Heart right ventricle (tissue), 16 donors: ENCODE measurements at regions of chr1 and their contacts with region 1.

Region 1: DNA sequence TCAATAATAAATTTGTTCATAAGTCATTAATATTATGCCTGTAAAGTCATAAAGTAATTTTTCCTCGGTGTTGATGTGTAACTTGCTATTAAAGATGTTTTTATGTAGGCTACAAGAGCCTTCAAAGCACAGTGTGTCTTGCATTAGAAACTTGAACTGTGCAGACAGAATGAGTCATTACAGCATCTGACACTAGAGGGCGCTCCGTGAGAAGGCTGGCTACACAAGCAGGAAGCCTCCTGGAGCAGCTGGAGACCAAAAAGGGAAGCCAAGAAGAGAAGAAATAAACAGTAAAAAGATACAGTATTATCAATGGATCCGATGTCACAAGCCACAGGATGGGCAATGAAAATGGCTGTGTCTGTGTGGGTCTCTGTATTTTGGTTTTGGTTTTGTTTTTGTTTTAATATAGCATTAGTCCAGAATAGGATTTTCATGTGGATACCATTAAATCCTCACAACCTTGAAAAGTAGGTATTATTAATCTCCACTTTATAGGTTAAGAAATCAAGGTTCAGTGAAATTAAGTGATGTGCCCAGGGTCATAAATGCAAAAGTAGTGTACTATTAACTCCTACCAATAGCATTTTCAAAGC is 16.1 kb upstream of the LRRC8D start:
- DNase-seq: peak; percentile 58 to 89
- ATAC-seq: peak; percentile 81 to 96 (median 91)
- H3K4me3 ChIP-seq: no peak overlapping the region
- H3K27ac ChIP-seq: no peak overlapping the region
- H3K4me1 ChIP-seq: peaks cover 0 to 5% (median 0%) of the 10 kb centered on the region in 9 donors
- H3K27me3 ChIP-seq: peaks cover 0 to 5% (median 0%) of the 10 kb centered on the region in 7 donors
- CTCF ChIP-seq: peak; percentile 85 to 97 (median 92)

Region 2: DNA sequence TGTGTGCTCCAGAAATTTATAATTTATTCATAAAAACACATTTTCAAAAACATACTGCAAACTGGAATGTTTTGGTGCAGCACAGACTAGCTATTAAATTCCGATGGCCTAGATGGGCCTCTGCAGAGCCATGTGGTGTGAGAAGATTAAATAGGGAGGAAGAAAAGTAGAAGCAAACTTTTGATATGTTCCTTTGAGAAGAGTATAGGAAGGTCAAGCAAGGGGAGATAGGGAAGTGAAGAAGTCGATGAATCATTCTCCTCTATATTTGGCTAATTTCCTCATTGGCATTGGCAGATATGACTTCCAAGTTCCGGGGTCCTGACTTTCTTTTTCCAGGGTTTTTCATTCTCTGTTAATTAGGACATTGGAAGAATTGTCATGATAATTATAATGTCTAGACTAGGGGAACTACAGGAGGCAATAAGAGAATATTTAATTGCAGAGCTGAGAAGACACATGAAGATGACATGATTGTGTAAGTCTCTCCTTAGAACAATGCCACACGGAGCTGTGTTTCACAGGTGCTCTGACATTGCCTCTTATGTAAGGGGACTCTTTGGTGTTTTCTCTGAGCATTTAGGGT is 170.9 kb after region 1 on chr1:
- intact Hi-C with region 1: loop called in 1 of 10 experiments (anchors 2 kb)
- DNase-seq: no peak
- ATAC-seq: peak in 1 of 8 donors; percentile 44
- H3K4me3 ChIP-seq: no peak overlapping the region
- H3K27ac ChIP-seq: no peak overlapping the region
- H3K4me1 ChIP-seq: peaks cover 0 to 21% (median 0%) of the 10 kb centered on the region in 9 donors
- H3K27me3 ChIP-seq: no peaks in the 10 kb centered on the region
- CTCF ChIP-seq: no peak

Region 3: DNA sequence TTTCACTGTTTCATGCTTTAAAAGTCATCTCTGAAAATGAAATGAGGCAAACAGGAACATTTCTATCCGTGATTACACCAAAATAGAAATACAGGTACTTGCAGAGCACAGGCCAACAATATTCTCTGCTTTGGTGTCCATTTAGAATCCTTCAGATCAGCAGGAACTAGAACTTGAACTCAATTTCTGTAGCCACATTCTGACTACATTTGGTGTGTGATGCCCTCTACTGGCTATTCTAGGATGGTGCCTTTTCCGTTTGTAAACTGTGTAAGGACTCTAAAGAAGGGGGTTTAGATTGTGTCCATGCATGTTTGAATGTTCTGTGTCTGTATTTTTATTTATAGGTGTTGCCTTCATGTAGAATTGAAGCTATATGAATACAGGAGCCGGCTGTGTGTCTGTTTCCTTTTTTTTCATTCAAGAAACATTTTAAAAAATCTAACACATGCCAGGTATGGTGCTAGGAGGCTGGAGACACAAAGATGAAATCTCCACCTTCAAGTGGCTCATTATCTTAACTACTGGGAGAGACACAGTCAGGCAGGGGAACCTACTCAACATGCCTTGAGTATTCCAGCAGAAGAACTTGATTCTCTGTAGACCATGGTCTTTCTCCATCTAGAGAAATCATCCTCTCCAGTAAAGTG is 182.6 kb after region 1 on chr1:
- intact Hi-C with region 1: loop called in 9 of 10 experiments (anchors 1 to 5 kb)
- DNase-seq: peak in 1 of 2 donors; percentile 64
- ATAC-seq: peak; percentile 69 to 93 (median 90)
- H3K4me3 ChIP-seq: no peak overlapping the region
- H3K27ac ChIP-seq: no peak overlapping the region
- H3K4me1 ChIP-seq: peaks cover 0 to 18% (median 0%) of the 10 kb centered on the region in 9 donors
- H3K27me3 ChIP-seq: no peaks in the 10 kb centered on the region
- CTCF ChIP-seq: peak; percentile 74 to 92 (median 90)